ENCODE measurements at regions of chr2 and their contacts with region 1.

Region 1: DNA sequence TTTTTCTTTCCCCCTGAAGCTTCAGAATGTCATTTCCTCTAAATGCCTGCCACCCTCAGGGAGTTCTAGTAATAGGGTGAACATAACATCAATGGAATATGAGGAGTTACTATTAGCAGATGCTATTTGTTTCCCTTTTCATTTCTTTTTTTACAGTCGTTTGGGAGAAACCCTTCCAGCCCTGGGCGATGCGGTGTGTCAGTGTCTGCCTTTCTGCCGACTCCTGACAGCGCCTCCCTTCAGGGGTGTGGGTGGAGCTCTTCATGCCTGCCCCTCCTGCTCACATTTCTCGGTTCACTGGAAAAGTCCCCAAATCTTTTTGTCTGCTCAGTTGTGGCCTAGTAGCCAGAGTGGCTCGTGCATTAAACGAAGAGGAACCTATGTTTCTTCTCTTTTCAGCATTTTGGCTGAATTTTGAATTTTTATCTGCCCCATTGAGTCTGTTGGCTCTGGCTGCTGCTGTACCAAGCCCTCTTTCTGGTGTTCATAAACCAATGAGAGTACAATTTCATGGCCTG is 72.3 kb downstream of the FMNL2 start:
- DNase-seq: no peak
- H3K4me3 ChIP-seq: no peak overlapping the region
- CTCF ChIP-seq: no peak

Region 2: DNA sequence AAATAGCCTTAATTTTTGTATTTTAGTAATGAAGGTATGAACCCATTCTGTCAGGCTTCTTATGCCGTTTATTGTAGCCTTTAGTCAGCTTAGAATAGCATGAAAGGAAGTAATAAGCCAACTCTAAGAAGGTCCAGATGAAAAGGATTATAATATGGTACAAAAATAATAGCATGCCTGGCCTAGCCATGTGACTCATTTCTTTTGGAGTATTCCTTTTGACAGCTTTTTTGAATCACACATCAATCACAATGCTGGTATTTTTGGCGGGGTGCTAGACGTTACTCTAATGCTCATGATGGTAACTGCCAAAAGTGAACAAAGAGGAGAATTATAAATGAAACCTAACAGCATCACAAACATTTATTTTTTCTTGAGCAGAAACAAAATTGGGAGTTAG is 52.4 kb before region 1 on chr2:
- in situ Hi-C with region 1: loop called (anchors 5 kb)
- DNase-seq: no peak
- H3K4me3 ChIP-seq: no peak overlapping the region
- CTCF ChIP-seq: no peak

Measured in astrocyte of the cerebellum (primary cell).